ENCODE measurements at regions of chr12 and their contacts with region 1.

Region 1: DNA sequence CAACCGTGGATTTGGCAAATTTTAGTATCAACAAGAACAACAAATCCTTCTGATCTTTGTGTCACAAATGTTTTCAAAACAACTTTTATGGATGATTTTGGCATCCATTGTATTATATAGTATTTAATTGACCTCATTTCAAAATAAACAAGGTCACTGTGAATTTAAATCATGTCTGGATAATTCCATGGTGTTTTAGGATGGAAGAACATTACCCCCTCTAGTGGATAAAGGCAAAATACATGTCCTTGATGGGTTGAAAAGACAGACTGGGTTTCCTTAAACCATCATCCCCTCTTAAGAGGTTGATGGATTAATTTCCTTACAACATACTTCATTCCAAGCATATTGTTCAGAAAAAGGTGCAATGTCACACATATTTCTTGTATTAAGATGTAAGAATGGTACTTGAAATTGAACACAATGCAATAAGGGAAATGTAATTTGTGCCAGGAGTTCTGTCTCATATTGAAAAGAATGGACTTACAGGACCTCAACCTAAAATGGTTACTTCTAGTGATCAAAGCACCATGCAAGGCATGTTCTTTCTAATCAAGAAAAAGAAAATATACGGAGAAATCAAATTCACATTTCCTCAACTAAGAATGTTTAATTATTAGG is 352.0 kb downstream of the BCAT1 start:
- DNase-seq: no peak

Region 2: DNA sequence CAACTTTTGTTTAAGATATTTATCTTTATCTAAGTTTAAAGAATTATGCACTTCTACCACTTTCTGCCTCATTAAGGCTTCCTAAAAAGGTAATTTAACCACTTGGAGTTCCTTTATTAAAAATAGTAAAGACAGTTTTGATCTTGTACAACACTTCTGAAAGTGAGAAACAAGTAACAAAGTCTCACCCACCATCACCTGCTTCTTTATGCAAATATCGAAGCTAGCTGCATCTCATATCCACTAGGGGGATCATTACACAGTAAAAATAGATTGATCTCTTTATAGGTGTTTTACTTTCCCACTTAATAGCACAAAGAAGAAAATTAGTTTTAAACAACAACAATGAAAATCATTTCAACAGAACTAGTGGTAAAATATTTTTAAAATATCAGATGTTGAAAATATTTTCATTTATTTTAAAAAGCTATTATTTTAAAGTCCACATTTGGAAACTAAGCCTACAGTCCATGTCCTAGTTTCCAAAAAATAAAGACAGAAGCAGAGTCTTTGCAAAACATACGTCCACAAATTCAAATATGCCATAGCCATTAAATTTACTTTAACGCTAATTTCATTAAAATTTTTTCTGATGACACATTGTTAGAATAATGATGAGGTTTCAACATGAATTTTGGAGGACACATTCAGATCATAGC is 487.4 kb before region 1 on chr12:
- intact Hi-C with region 1: loop called (anchors 10 kb)
- DNase-seq: no peak

Region 3: DNA sequence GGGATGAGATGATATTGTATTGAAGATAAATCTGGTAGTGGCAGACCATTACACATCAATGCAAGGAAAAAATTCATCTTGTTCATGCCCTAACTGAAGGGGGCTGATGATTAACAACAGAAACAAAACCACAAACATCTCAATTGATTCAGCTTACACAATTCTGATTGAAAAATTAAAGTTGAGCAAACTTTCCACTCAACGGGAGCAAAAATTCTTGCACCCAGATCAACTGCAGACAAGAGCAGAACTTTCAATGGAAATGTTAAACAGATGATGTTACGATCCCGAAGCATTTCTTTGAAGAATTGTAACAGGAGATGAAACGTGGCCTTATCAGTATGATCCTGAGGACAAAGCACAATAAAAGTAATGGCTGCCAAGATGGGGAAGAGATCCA is 475.0 kb before region 1 on chr12:
- intact Hi-C with region 1: no loop called
- DNase-seq: no peak